AG04449 (cell line): ENCODE measurements at regions of chr10 and their contacts with region 1.

Region 1: DNA sequence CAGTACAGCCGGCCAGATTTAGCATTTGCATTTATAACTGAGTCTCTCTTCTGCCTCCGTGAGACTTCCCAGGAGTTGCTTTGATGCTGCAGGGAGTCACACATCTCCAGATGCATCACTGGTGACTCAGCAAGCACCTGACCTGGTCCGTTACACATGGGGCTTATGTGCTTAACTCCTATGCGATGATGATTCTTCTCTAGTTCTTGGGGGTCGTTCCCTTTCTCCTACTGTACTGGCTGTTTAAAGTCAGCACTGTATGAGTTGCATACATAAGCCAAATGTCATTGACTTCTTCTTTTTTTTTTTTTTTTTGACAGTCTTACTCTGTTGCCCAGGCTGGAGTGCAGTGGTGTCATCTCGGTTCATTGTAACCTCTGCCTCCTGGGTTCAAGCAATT is 13.0 kb upstream of the AKR1E2 start:
- DNase-seq: peak; percentile 21
- H3K4me3 ChIP-seq: no peak overlapping the region
- CTCF ChIP-seq: no peak

Region 2: DNA sequence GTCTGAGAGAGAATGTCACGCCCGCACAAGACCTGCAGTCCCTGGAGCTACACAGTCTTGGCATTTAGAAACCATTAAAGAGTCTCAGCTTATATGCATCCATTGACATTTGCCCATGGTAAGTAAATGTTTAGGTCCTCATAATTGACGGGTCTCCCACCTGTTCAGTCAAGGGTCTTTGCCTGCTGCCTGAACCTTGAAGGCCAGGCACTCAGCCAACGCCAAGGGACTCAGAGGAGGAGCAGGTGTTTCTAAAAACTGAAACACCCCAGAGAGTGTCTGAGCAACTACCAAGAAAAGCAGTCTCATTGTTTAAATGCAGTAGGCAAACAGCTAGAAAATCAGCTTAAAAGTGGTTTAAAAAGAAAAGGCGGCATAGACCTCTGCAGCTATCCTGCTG is 251.7 kb before region 1 on chr10:
- CTCF ChIA-PET with region 1: no interaction called
- POLR2A ChIA-PET with region 1: no interaction called
- DNase-seq: no peak
- H3K4me3 ChIP-seq: no peak overlapping the region
- CTCF ChIP-seq: no peak

Region 3: GRCh38 chr10:4825851-4826665 is 13.0 kb after region 1 on chr10 and contains the start of gene AKR1E2:
- CTCF ChIA-PET with region 1: interaction called, 23 read pairs
- POLR2A ChIA-PET with region 1: no interaction called
- DNase-seq: peak; percentile 55
- H3K4me3 ChIP-seq: peak within 1 kb of the TSS; percentile 59
- CTCF ChIP-seq: no peak

Region 4: DNA sequence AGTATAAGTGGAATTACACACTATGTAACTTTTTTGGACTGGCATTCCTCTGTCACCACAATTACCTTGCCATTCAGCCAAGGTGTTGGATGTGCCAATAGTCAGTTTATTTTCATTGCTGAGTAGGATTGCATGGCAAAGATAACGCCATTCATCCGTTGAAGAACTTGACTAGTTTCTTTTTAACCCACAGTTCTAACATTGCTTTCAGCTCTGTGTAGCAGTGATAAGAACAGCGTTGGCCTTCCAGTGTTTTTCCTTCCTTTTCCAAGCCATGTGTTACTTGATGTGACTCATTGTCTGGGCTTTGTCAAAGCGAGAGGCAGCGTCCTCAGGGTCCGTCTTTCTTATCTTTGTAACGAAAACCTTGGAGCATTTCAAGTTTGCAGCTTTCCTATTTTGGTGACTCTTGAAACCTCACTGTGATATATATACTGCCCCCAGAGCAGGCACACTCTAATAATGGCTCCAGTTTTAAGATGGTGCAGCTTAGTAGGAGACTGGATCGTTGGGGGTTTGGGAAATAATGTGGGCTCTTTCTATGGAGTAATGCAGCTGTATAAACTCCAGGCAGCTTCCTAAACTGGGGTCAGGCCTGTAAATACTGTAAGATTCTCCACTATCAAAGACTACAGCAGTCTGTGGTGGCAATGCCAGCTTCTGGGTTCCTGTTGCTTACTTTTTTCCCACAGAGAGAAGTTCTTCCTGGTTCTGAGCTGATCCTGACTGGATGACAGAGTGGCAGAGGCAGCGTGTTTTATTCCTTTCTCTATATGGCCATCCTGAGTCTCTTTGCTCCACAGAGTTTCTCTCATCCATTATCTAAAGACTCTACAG is 54.7 kb after region 1 on chr10:
- CTCF ChIA-PET with region 1: no interaction called
- POLR2A ChIA-PET with region 1: no interaction called
- DNase-seq: no peak
- H3K4me3 ChIP-seq: no peak overlapping the region
- CTCF ChIP-seq: no peak

Region 5: DNA sequence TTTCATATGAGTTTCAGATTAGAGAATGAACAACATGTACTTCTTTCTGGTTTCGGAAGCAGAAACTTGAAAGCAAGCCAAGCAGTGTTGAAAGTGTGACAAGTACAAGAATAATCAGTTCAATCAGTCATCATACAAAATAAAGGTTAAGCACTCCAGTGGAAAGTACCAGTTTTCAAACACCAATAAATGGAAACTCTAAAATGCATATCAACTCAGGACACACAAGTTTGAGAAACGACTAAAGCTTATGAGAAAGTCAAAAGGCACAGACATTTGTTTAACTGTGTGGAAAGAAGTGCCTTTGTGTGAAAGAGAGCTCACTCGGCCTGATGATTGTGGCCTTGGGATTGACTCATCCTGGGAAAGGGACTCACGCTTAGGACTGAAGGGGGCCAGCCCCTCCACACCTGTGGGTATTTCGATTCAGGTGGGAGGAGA is 89.6 kb after region 1 on chr10:
- CTCF ChIA-PET with region 1: no interaction called
- POLR2A ChIA-PET with region 1: no interaction called
- DNase-seq: no peak
- H3K4me3 ChIP-seq: no peak overlapping the region
- CTCF ChIP-seq: no peak

Region 6: GRCh38 chr10:5283305-5284158 is 470.5 kb after region 1 on chr10:
- CTCF ChIA-PET with region 1: interaction called, 16 read pairs
- POLR2A ChIA-PET with region 1: no interaction called
- DNase-seq: no peak
- H3K4me3 ChIP-seq: no peak overlapping the region
- CTCF ChIP-seq: peak; percentile 70

Region 7: GRCh38 chr10:5434017-5434753 is 621.2 kb after region 1 on chr10:
- CTCF ChIA-PET with region 1: interaction called, 85 read pairs
- POLR2A ChIA-PET with region 1: no interaction called
- DNase-seq: peak; percentile 53
- H3K4me3 ChIP-seq: no peak overlapping the region
- CTCF ChIP-seq: peak; percentile 51